Activated CD4-positive, alpha-beta T cell treated with anti-CD3 and anti-CD28 coated beads, Interleukin-2, amount 10 ng/mL, durations not matched to agents 24 days and 14 days (primary cell): ENCODE measurements at regions of chr5 and their contacts with region 1.

Region 1: DNA sequence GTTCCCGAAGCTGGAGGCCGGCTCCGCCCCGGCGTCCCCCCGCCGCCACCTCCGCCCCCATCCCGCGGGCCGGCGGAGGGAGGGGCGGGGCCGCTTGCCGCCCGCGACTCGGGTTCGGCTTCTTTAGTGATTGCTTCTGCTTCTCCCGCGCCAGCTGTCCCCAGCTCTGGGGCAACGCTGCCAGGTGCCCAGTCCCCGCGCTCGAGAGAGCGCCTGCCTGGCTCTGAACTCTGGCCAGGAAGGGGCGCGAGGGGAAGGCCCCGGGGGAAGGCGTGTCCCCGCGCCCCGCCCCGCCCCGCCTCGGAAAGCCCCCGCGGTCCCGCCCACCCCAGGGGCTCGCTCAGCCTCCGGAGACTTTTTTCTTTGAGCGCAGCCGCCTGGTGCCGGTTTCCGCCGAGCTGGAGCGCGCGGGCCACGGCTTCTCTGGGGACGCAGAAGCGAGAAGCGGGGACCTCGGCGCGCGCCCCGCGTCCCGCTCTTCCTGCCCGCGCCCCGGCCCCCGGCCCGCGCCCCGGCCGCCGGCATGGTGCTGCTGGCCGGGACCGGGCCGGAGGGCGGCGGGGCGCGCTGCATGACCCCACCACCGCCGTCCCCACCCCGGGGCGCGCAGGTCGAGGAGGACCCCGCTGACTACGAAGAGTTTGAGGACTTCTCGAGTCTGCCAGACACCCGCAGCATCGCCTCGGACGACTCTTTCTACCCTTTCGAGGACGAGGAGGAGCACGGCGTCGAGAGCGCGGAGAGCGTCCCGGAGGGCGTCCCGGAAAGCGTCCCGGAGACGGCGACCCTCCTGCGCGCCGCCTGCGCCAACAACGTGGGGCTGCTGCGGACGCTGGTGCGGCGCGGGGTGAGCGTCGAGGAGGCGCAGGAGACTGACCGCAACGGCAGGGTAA is at the start of gene ANKRD33B:
- DNase-seq: peak; percentile 95
- H3K4me3 Mint-ChIP-seq: peak within 1 kb of the TSS; percentile 90
- H3K27ac Mint-ChIP-seq: peak within 1 kb of the TSS; percentile 88
- H3K4me1 Mint-ChIP-seq: peaks cover 20% of the 10 kb centered on the region
- H3K27me3 Mint-ChIP-seq: peaks cover 23% of the 10 kb centered on the region
- total RNA-seq, gene ANKRD33B: 21.0 and 21.7 TPM in 2 replicates

Region 2: GRCh38 chr5:10214041-10214440 is 350.1 kb before region 1 on chr5:
- intact Hi-C with region 1: no loop called
- DNase-seq: no peak
- H3K4me3 Mint-ChIP-seq: no peak overlapping the region
- H3K27ac Mint-ChIP-seq: no peak overlapping the region
- H3K4me1 Mint-ChIP-seq: no peaks in the 10 kb centered on the region
- H3K27me3 Mint-ChIP-seq: no peaks in the 10 kb centered on the region

Region 3: GRCh38 chr5:10249948-10250803 is 314.0 kb before region 1 on chr5 and contains the start of gene CCT5:
- intact Hi-C with region 1: loop called (anchors 5 kb)
- DNase-seq: peak; percentile 97
- H3K4me3 Mint-ChIP-seq: peak within 1 kb of the TSS; percentile 96
- H3K27ac Mint-ChIP-seq: peak within 1 kb of the TSS; percentile 96
- H3K4me1 Mint-ChIP-seq: peaks cover 40% of the 10 kb centered on the region
- H3K27me3 Mint-ChIP-seq: peaks cover 3% of the 10 kb centered on the region
- total RNA-seq, gene CCT5: 566 and 581 TPM in 2 replicates

Region 4: DNA sequence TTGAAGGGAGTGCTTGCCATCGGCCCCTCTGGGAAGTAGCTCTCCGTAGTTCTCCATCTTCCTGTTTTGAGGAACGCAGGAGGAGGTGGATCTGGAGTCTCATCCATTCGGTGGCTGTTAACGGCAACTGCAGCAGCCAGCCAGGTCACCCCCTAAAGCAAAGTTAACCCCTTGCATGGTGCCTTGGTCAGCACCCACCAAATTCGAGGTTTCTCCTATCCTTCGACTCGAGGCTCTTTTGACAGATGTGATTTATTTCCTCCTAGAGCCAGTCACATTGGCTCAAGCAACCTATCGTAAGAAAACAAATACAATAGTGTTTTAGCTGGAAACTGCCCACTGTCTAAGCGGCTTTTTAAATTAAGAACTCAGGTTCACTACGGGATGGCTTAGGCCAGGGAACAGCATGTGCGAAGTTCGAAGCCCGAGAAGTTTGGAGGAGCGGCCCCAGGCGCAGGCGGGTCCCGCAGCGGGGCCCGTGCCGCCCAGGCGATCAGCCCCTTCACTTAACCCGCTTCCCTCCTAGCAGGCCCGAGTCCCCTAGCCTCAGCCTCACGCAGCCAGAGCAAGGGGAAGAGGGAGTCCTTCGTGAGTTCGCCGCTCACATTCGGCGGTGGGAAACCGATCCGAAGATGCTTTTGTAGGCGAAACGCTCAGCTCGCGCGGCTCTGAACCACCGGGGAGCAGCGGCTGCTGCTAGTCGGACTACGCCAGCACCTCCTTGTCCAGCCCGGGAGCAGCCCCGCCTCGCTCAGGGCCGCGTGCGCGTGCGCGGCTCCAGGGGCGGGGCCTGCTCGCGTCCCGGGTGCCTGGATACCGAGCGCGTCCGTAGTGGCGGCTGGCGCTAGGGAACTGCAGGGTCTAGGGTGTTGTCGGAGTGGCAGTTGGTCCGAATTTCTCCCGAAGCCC is 122.9 kb before region 1 on chr5 and contains the start of gene ROPN1L:
- intact Hi-C with region 1: loop called (anchors 1 kb)
- DNase-seq: peak; percentile 96
- H3K4me3 Mint-ChIP-seq: peak within 1 kb of the TSS; percentile 88
- H3K27ac Mint-ChIP-seq: no peak within 1 kb of the TSS
- H3K4me1 Mint-ChIP-seq: peaks cover 31% of the 10 kb centered on the region
- H3K27me3 Mint-ChIP-seq: peaks cover 7% of the 10 kb centered on the region
- total RNA-seq, gene ROPN1L: not detected in 2 replicates

Region 5: GRCh38 chr5:10577371-10578292 is 13.4 kb after region 1 on chr5:
- intact Hi-C with region 1: loop called (anchors 1 kb)
- DNase-seq: no peak
- H3K4me3 Mint-ChIP-seq: peak overlapping the region; percentile 3
- H3K27ac Mint-ChIP-seq: peak overlapping the region; percentile 7
- H3K4me1 Mint-ChIP-seq: peaks cover 42% of the 10 kb centered on the region
- H3K27me3 Mint-ChIP-seq: no peaks in the 10 kb centered on the region

Region 6: DNA sequence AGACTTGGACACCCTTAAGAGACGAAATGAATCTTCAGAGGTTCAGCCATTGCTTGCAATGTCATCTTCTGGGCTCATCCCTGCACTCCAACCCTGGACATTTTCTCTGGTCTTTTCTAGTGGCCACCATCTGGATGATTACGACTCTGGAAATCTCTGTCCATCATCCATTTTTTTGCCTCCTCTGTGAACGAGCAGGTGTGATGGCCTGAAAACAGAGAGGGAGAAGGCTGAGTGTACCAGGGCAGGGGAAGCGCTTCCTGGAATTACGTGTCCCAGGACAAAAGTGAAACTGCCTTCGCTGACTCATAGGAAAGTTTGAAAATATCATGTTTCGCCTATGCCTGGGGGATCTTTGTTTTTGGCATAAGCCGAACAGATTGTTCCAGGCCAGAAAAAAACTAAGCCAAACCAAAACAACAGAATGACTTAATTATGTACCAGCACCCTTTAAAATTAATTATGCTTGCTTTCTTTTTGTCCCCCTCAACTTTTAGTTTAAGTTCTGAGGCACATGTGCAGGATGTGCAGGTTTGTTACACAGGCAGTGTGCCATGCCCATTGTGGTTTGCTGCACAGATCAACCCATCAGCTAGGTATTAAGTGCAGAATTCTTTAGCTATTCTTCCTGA is 31.6 kb after region 1 on chr5:
- intact Hi-C with region 1: loop called (anchors 1 kb)
- DNase-seq: peak; percentile 83
- H3K4me3 Mint-ChIP-seq: peak overlapping the region; percentile 44
- H3K27ac Mint-ChIP-seq: peak overlapping the region; percentile 80
- H3K4me1 Mint-ChIP-seq: peaks cover 61% of the 10 kb centered on the region
- H3K27me3 Mint-ChIP-seq: no peaks in the 10 kb centered on the region

Region 7: GRCh38 chr5:10635257-10635866 is 71.2 kb after region 1 on chr5:
- intact Hi-C with region 1: loop called (anchors 1 kb)
- DNase-seq: peak; percentile 89
- H3K4me3 Mint-ChIP-seq: peak overlapping the region; percentile 81
- H3K27ac Mint-ChIP-seq: peak overlapping the region; percentile 98
- H3K4me1 Mint-ChIP-seq: peaks cover 71% of the 10 kb centered on the region
- H3K27me3 Mint-ChIP-seq: no peaks in the 10 kb centered on the region